B cell (primary cell): ENCODE measurements at regions of chr14 and their contacts with region 1.

Region 1: GRCh38 chr14:94364037-94364436 is 24.4 kb downstream of the SERPINA1 start:
- DNase-seq: no peak
- ATAC-seq: no peak
- H3K4me3 ChIP-seq: no peak overlapping the region
- H3K4me3 Mint-ChIP-seq: no peak overlapping the region
- H3K27ac ChIP-seq: no peak overlapping the region
- H3K27ac Mint-ChIP-seq: no peak overlapping the region
- H3K4me1 ChIP-seq: no peaks in the 10 kb centered on the region
- H3K4me1 Mint-ChIP-seq: no peaks in the 10 kb centered on the region
- H3K27me3 ChIP-seq: no peaks in the 10 kb centered on the region
- H3K27me3 Mint-ChIP-seq: peaks cover 5% of the 10 kb centered on the region
- CTCF ChIP-seq: no peak

Region 2: DNA sequence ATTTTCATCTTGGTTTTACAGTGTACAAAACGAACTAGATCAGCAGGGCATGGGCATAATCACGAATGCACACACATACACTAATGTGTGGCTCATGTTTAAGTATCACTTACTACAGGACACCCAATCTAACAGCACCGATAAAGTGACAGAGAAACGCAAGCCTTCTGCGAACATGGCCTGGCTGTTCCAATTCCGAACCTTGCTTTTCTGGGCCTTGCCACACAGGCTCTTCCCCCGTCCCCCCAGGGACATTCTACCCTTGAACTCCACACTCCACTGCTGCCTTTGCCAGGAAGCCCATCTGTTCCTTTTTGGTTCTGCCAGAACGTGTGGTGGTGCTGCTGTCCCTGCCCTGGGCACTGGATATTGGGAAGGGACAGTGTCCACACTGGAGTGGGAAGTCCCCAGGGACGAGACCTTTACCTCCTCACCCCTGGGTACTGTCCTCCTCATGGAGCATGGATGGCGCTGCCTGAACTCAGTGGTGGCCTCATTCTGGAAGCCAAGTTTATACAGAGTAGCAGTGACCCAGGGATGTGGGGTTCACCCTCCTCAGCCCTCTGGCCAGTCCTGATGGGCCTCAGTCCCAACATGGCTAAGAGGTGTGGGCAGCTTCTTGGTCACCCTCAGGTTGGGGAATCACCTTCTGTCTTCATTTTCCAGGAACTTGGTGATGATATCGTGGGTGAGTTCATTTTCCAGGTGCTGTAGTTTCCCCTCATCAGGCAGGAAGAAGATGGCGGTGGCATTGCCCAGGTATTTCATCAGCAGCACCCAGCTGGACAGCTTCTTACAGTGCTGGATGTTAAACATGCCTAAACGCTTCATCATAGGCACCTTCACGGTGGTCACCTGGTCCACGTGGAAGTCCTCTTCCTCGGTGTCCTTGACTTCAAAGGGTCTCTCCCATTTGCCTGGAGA is 16.4 kb after region 1 on chr14:
- CTCF ChIA-PET with region 1: no interaction called
- POLR2A ChIA-PET with region 1: no interaction called
- intact Hi-C with region 1: loop called (anchors 1 kb)
- DNase-seq: no peak
- ATAC-seq: no peak
- H3K4me3 ChIP-seq: no peak overlapping the region
- H3K4me3 Mint-ChIP-seq: no peak overlapping the region
- H3K27ac ChIP-seq: no peak overlapping the region
- H3K27ac Mint-ChIP-seq: no peak overlapping the region
- H3K4me1 ChIP-seq: no peaks in the 10 kb centered on the region
- H3K4me1 Mint-ChIP-seq: no peaks in the 10 kb centered on the region
- H3K27me3 ChIP-seq: no peaks in the 10 kb centered on the region
- H3K27me3 Mint-ChIP-seq: peaks cover 9% of the 10 kb centered on the region
- CTCF ChIP-seq: no peak

Region 3: DNA sequence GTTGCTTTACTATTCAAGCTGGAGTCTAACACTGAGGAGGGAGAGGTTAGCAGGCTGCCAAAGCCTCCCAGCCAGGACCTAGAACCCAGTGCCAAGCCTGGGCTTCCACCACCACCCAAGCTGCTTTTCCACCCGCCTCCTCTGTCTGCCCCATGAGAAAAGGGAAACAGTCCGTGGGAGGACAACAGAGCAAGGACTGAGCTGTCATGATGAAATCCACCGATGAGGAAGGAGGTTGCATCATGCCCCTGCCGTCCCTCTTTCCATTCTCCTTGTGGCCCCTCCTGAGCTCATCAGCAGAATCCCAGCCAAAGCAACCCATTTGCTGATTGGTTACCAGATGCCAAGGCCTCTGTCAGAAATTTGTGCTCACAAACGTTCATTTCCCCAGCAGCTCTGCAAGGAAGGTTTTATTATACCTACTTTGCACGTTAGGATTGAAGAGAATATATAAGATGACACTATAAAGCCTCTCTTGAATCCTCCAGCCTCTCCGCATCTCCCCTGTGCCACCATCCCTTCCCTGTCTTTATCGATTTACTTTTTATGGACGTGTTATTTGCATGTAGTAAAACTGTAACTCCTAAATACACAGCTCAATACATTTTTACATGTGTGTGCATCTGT is 30.7 kb after region 1 on chr14:
- CTCF ChIA-PET with region 1: no interaction called
- POLR2A ChIA-PET with region 1: no interaction called
- intact Hi-C with region 1: no loop called
- DNase-seq: no peak
- ATAC-seq: no peak
- H3K4me3 ChIP-seq: no peak overlapping the region
- H3K4me3 Mint-ChIP-seq: no peak overlapping the region
- H3K27ac ChIP-seq: no peak overlapping the region
- H3K27ac Mint-ChIP-seq: no peak overlapping the region
- H3K4me1 ChIP-seq: no peaks in the 10 kb centered on the region
- H3K4me1 Mint-ChIP-seq: no peaks in the 10 kb centered on the region
- H3K27me3 ChIP-seq: peaks cover 0 to 3% (median 0%) of the 10 kb centered on the region in 4 experiments
- H3K27me3 Mint-ChIP-seq: peaks cover 13% of the 10 kb centered on the region
- CTCF ChIP-seq: no peak